CD4-positive, alpha-beta memory T cell (primary cell): ENCODE measurements at regions of chr10 and their contacts with region 1.

Region 1: GRCh38 chr10:110857265-110858158 is 14.2 kb upstream of the PDCD4 start:
- DNase-seq: peak in 4 of 5 donors; percentile 51 to 71 (median 56)
- H3K4me3 ChIP-seq: no peak overlapping the region
- H3K4me3 Mint-ChIP-seq: peak overlapping the region in 7 of 8 donors; percentile 53 to 89 (median 72)
- H3K27ac ChIP-seq: peak overlapping the region; percentile 57
- H3K27ac Mint-ChIP-seq: peak overlapping the region; percentile 91 to 99 (median 97)
- H3K4me1 ChIP-seq: peaks cover 91% of the 10 kb centered on the region
- H3K4me1 Mint-ChIP-seq: peaks cover 67 to 92% (median 79%) of the 10 kb centered on the region in 4 donors
- H3K27me3 ChIP-seq: no peaks in the 10 kb centered on the region
- H3K27me3 Mint-ChIP-seq: no peaks in the 10 kb centered on the region

Region 2: DNA sequence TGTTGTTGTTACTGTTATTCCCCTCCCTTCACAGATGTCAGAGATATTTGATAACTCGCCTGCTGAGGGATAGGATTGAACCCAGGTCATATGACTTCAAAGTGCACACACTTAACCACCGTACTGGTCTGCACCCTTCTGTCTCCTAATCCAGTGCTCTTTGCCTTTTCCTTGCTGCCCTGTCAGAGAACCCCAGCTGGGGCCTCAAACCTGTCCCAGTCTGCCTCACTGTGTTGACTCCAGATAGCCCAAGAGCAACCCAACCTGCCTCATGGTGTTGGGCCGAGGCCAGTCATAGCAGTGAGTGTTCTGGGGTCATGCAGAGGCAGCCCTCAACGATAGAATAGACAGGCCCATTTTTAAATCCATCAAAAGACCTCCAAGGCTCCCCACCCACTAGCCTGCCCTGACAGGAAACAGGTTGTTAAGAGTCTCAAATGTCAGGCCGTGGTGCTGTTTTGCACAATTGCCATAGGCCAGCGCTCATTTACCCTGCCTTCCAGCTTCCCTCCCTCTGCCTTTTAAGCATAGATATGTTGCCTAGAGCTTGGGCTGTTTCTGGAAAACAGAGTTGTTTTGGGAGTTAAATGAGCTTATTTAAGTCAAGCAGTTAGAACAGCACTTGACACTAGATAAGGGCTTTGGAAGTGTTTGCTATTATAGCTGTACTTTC is 22.7 kb before region 1 on chr10:
- CTCF ChIA-PET with region 1: interaction called, 13 read pairs
- POLR2A ChIA-PET with region 1: interaction called, 11 read pairs
- intact Hi-C with region 1: no loop called
- DNase-seq: peak in 2 of 5 donors; percentile 19 to 24
- H3K4me3 ChIP-seq: no peak overlapping the region
- H3K4me3 Mint-ChIP-seq: peak overlapping the region in 3 of 8 donors; percentile 0 to 26 (median 17)
- H3K27ac ChIP-seq: no peak overlapping the region
- H3K27ac Mint-ChIP-seq: peak overlapping the region in 6 of 7 donors; percentile 44 to 82 (median 62)
- H3K4me1 ChIP-seq: peaks cover 26% of the 10 kb centered on the region
- H3K4me1 Mint-ChIP-seq: peaks cover 5 to 29% (median 15%) of the 10 kb centered on the region in 4 donors
- H3K27me3 ChIP-seq: no peaks in the 10 kb centered on the region
- H3K27me3 Mint-ChIP-seq: no peaks in the 10 kb centered on the region

Region 3: DNA sequence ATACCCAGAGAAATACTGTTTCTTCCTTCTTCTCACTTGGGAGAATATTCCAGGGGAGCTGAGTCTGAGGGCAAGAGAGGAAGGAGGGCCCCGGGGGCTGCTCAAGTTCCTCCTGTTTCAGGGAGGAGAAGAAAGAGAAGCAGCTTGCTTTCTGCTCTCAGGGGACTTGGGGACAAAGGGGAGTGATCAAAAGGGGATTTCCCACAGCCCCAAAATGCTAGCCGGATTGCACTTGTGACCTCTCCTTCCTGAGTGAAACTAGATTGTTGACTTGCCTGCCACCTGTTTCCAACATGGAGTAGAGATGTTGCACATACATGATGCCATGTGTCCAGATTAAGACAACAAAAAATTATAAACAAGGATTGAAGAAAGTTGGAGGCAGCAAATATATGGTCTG is 14.5 kb before region 1 on chr10:
- CTCF ChIA-PET with region 1: interaction called, 20 read pairs
- POLR2A ChIA-PET with region 1: interaction called, 45 read pairs
- intact Hi-C with region 1: no loop called
- DNase-seq: peak; percentile 44 to 78 (median 59)
- H3K4me3 ChIP-seq: no peak overlapping the region
- H3K4me3 Mint-ChIP-seq: peak overlapping the region; percentile 7 to 83 (median 34)
- H3K27ac ChIP-seq: peak overlapping the region; percentile 5
- H3K27ac Mint-ChIP-seq: peak overlapping the region; percentile 54 to 95 (median 85)
- H3K4me1 ChIP-seq: peaks cover 35% of the 10 kb centered on the region
- H3K4me1 Mint-ChIP-seq: peaks cover 28 to 62% (median 46%) of the 10 kb centered on the region in 4 donors
- H3K27me3 ChIP-seq: no peaks in the 10 kb centered on the region
- H3K27me3 Mint-ChIP-seq: no peaks in the 10 kb centered on the region

Region 4: GRCh38 chr10:110883924-110884323 is 26.4 kb after region 1 on chr10:
- CTCF ChIA-PET with region 1: interaction called, 31 read pairs
- POLR2A ChIA-PET with region 1: interaction called, 69 read pairs
- intact Hi-C with region 1: no loop called
- DNase-seq: no peak
- H3K4me3 ChIP-seq: no peak overlapping the region
- H3K4me3 Mint-ChIP-seq: peak overlapping the region; percentile 54 to 83 (median 80)
- H3K27ac ChIP-seq: no peak overlapping the region
- H3K27ac Mint-ChIP-seq: peak overlapping the region; percentile 65 to 94 (median 80)
- H3K4me1 ChIP-seq: peaks cover 81% of the 10 kb centered on the region
- H3K4me1 Mint-ChIP-seq: peaks cover 52 to 83% (median 68%) of the 10 kb centered on the region in 4 donors
- H3K27me3 ChIP-seq: no peaks in the 10 kb centered on the region
- H3K27me3 Mint-ChIP-seq: no peaks in the 10 kb centered on the region